B cell (primary cell): ENCODE measurements at regions of chr7 and their contacts with region 1.

Region 1: GRCh38 chr7:123242467-123243092 is 42.8 kb upstream of the SLC13A1 start:
- DNase-seq: no peak
- ATAC-seq: no peak
- H3K4me3 ChIP-seq: no peak overlapping the region
- H3K4me3 Mint-ChIP-seq: no peak overlapping the region
- H3K27ac ChIP-seq: no peak overlapping the region
- H3K27ac Mint-ChIP-seq: no peak overlapping the region
- H3K4me1 ChIP-seq: no peaks in the 10 kb centered on the region
- H3K4me1 Mint-ChIP-seq: no peaks in the 10 kb centered on the region
- H3K27me3 ChIP-seq: no peaks in the 10 kb centered on the region
- H3K27me3 Mint-ChIP-seq: no peaks in the 10 kb centered on the region
- CTCF ChIP-seq: no peak

Region 2: GRCh38 chr7:123738356-123738755 is 495.8 kb after region 1 on chr7:
- CTCF ChIA-PET with region 1: no interaction called
- POLR2A ChIA-PET with region 1: no interaction called
- intact Hi-C with region 1: loop called (anchors 5 kb)
- DNase-seq: no peak
- ATAC-seq: no peak
- H3K4me3 ChIP-seq: no peak overlapping the region
- H3K4me3 Mint-ChIP-seq: no peak overlapping the region
- H3K27ac ChIP-seq: no peak overlapping the region
- H3K27ac Mint-ChIP-seq: no peak overlapping the region
- H3K4me1 ChIP-seq: no peaks in the 10 kb centered on the region
- H3K4me1 Mint-ChIP-seq: peaks cover 28% of the 10 kb centered on the region
- H3K27me3 ChIP-seq: no peaks in the 10 kb centered on the region
- H3K27me3 Mint-ChIP-seq: no peaks in the 10 kb centered on the region
- CTCF ChIP-seq: no peak